ENCODE measurements at regions of chr3 and their contacts with region 1.

Region 1: GRCh38 chr3:115040673-115041286 is 106.3 kb downstream of the ZBTB20 start:
- DNase-seq: no peak

Region 2: DNA sequence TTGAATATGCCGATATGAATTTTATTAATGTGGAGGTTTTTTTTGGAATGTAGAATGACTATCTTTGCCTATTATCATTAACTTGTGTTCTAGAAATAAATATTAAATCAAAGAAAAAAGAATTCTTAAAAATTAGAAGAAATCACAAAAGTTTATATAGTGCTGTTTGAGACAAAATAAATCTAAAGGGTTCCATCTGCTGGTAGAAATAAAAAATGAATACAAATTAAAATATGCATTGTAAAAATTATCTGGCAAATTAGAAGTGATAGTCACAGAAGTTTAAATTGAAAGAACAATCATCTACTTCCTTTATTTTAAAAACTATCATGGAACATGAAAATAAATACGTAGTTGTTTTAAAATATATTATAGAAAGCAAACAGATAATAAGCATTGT is 129.0 kb after region 1 on chr3:
- intact Hi-C with region 1: loop called (anchors 10 kb)
- DNase-seq: no peak

Region 3: GRCh38 chr3:115254492-115255196 is 213.9 kb after region 1 on chr3:
- intact Hi-C with region 1: no loop called
- DNase-seq: peak; percentile 73

Measured in cardiac septum (tissue), 1 donor.